ENCODE measurements at regions of chr7 and their contacts with region 1.

Region 1: DNA sequence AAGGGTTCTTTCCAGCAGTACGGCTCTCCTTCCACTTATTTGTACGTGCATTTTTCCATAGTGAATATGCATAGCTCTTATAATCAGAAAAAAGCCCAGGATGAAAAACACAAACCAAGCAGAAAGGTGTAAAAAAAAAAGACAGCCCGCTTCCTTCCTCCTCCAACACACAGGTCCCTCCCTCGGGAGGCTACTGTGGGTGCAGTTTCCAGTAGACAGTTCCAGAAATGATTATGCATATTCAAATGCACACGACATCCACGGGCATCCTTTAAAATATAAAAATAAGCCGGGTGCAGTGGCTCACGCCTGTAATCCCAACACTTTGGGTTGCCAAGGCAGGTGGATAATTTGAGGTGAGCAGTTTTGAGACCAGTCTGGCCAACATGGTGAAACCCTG is 59.9 kb downstream of the TNRC18 start:
- DNase-seq: no peak
- H3K4me3 ChIP-seq: no peak overlapping the region
- H3K27ac ChIP-seq: no peak overlapping the region
- H3K4me1 ChIP-seq: peaks cover 0 to 17% (median 9%) of the 10 kb centered on the region in 4 donors
- H3K27me3 ChIP-seq: no peaks in the 10 kb centered on the region
- CTCF ChIP-seq: no peak
- EP300 ChIP-seq: no peak
- POLR2A ChIP-seq: no peak

Region 2: GRCh38 chr7:4307316-4308204 is 1056.2 kb before region 1 on chr7:
- in situ Hi-C with region 1: no loop called
- intact Hi-C with region 1: no loop called
- DNase-seq: no peak
- H3K4me3 ChIP-seq: no peak overlapping the region
- H3K27ac ChIP-seq: no peak overlapping the region
- H3K4me1 ChIP-seq: no peaks in the 10 kb centered on the region
- H3K27me3 ChIP-seq: no peaks in the 10 kb centered on the region
- CTCF ChIP-seq: no peak
- EP300 ChIP-seq: no peak
- POLR2A ChIP-seq: no peak

Region 3: DNA sequence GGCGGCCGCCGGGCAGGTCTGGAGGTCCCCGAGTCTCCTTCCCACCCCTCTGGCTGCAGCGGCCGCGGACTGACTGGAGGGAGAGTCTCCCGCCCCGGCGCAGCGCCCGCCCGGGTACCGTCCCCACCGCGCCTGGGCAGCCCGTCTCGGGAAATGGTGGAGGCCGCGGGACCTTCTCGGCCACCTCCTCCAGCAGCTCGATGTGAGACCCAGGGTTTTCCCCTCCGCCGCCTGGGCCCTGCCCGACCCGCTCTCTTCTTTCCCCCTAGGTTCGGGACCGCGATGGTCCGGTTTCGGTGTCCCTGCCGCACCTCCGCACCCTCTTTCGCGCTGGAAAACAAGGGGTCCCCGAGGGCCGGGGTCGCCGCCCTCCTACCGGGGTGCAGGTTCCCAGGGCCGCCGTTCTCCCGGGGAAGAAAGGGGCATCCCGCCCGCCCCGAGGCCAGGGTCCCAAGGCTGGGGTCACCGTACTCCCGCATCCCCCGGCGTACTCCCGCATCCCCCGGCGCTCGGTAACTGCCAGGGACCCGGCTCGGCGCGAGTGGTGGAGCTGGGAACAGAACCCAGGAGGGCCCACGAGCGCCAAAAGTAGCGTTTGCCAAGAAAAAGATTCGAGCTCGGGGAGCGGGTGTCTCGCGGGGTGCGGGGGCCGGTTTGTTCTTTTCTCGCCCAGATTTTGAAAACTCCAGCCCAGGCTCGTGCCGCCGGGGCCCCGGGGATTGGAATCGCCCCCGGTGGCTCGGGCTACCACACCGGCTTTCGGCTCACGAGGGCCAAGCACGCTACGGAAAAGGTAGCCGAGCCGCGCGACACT is 56.5 kb after region 1 on chr7:
- in situ Hi-C with region 1: no loop called
- intact Hi-C with region 1: no loop called
- DNase-seq: no peak
- H3K4me3 ChIP-seq: peak overlapping the region; percentile 78 to 99 (median 94)
- H3K27ac ChIP-seq: peak overlapping the region; percentile 96 to 100 (median 98)
- H3K4me1 ChIP-seq: peaks cover 10 to 28% (median 23%) of the 10 kb centered on the region in 4 donors
- H3K27me3 ChIP-seq: no peaks in the 10 kb centered on the region
- CTCF ChIP-seq: no peak
- EP300 ChIP-seq: no peak
- POLR2A ChIP-seq: no peak

Region 4: DNA sequence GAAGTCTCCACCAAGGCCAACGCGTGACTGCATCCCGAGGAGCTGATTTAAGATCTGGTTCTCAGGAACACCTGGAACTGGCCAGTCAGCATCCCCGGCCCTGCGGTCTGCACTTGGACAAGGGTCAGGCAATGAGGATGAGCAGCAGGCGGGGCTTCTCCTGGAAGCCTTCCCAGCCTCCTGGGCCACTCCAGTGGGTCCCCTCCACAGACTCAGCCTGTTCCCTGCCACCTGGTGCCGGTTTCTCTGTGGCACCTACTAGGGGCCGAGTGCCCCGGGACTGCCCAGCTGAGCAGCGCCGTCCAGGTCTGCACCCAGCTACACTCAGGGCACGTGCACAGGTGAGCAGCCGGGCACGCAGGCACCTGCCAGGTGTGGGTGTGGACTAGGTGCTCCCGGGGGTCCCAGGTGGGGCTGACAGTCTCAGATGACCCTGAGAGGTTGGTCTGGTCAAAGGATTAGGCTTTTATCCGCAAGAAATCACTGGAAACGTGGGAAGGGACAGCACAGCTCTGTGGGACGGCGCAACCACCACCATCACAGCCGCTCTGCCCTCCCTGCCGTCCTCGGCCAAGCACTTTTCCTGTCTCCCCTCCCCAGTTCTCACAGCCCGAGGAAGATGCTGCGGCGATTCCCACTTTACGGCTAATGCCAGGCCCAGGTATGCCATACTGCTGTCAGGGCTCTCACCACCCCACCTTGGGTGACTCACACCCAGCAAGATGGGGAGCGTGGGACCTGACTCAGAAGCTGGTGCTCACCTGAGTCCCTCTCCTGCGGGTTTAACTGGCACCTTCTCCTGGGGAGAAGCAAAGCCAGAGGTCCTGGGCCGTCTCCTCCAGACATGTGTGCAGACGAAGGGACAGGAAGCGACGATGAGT is 251.7 kb after region 1 on chr7:
- in situ Hi-C with region 1: no loop called
- intact Hi-C with region 1: no loop called
- DNase-seq: no peak
- H3K4me3 ChIP-seq: no peak overlapping the region
- H3K27ac ChIP-seq: no peak overlapping the region
- H3K4me1 ChIP-seq: no peaks in the 10 kb centered on the region
- H3K27me3 ChIP-seq: no peaks in the 10 kb centered on the region
- CTCF ChIP-seq: no peak
- EP300 ChIP-seq: no peak
- POLR2A ChIP-seq: no peak

Region 5: DNA sequence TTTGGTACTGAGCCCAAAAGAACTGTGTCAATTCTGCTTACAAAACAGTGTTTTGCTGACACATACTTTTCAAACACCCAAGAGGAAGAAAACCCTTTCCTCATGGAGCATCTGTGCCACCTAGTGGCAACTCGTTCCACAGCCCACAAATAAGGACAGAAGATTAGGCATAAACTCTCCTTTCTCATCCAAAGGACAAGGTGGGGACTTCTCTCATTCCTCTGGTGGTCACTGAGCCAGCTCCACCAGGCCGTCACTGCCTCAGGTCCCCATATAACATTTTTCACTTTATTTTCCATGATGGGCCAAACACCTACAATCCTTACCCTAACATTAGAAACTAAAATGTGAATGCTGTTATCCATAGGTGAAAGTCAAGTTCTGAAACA is 340.8 kb after region 1 on chr7:
- in situ Hi-C with region 1: no loop called
- intact Hi-C with region 1: loop called (anchors 10 kb)
- DNase-seq: peak; percentile 79
- H3K4me3 ChIP-seq: no peak overlapping the region
- H3K27ac ChIP-seq: peak overlapping the region in 3 of 4 donors; percentile 77 to 93 (median 83)
- H3K4me1 ChIP-seq: peaks cover 9 to 30% (median 13%) of the 10 kb centered on the region in 4 donors
- H3K27me3 ChIP-seq: no peaks in the 10 kb centered on the region
- CTCF ChIP-seq: peak; percentile 85 to 90 (median 90)
- EP300 ChIP-seq: no peak
- POLR2A ChIP-seq: no peak